Activated CD8-positive, alpha-beta T cell treated with anti-CD3 and anti-CD28 coated beads for 36 hours (primary cell): ENCODE measurements at regions of chr11 and their contacts with region 1.

Region 1: GRCh38 chr11:61792310-61793085 is at the starts of genes FEN1 and TMEM258:
- DNase-seq: peak; percentile 94
- ATAC-seq: peak; percentile 87
- H3K4me3 Mint-ChIP-seq: peak within 1 kb of the TSS; percentile 89
- H3K27ac Mint-ChIP-seq: peak within 1 kb of the TSS; percentile 100
- H3K4me1 Mint-ChIP-seq: peaks cover 57% of the 10 kb centered on the region
- H3K27me3 Mint-ChIP-seq: no peaks in the 10 kb centered on the region
- CTCF ChIP-seq: no peak
- total RNA-seq, gene FEN1: 109 to 114 TPM
- total RNA-seq, gene TMEM258: 162 to 170 TPM

Region 2: DNA sequence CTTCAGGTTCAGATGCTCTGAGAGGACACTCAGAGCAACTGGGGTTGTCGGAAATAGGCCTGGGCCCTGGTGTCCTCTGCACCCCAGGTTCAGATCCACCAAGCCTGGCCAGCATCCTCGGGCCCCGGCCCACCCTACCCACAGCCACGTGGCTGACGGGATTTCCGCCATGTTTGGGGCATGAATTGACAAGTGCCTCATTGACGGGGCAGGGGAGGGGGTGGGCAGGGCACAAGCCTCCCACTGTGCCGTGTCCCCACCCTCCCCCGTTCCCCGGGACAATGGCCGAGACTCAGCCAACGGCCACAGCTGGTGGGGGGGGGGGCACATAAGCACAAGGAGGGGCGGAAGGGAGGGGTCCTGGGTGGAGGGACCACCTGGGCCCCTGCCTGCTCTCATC is 31.6 kb before region 1 on chr11:
- CTCF ChIA-PET with region 1: no interaction called
- POLR2A ChIA-PET with region 1: no interaction called
- intact Hi-C with region 1: no loop called
- DNase-seq: no peak
- ATAC-seq: no peak
- H3K4me3 Mint-ChIP-seq: no peak overlapping the region
- H3K27ac Mint-ChIP-seq: no peak overlapping the region
- H3K4me1 Mint-ChIP-seq: peaks cover 11% of the 10 kb centered on the region
- H3K27me3 Mint-ChIP-seq: no peaks in the 10 kb centered on the region
- CTCF ChIP-seq: no peak

Region 3: DNA sequence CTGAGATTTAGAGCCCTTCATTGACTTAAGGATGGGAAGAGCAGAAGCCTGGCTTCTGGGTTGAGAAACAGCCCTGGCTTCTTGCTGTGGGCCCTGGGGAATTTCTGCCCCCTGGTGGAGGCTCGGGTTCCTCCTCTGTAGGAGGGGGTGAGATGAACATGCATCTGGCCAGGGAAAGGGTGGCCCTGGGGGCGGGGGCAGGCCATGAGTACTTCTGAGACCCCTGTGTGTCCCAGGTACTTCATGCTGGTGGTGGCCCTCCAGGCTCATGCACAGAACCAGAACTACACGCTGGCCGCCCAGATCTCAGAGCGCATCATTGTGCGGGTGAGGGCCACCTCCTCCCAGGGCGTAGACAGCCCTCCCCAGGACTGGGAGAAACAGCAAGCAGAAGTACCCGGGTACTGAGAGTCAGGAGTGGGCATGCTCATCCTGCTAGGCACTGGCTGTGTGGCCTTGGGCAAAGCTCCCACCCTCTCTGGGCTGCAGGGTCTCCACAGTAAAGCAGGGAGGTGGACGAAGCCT is 15.9 kb before region 1 on chr11:
- CTCF ChIA-PET with region 1: interaction called, 14 read pairs
- POLR2A ChIA-PET with region 1: interaction called, 32 read pairs
- intact Hi-C with region 1: no loop called
- DNase-seq: peak; percentile 86
- ATAC-seq: peak; percentile 78
- H3K4me3 Mint-ChIP-seq: no peak overlapping the region
- H3K27ac Mint-ChIP-seq: no peak overlapping the region
- H3K4me1 Mint-ChIP-seq: peaks cover 13% of the 10 kb centered on the region
- H3K27me3 Mint-ChIP-seq: peaks cover 2% of the 10 kb centered on the region
- CTCF ChIP-seq: peak; percentile 73

Region 4: DNA sequence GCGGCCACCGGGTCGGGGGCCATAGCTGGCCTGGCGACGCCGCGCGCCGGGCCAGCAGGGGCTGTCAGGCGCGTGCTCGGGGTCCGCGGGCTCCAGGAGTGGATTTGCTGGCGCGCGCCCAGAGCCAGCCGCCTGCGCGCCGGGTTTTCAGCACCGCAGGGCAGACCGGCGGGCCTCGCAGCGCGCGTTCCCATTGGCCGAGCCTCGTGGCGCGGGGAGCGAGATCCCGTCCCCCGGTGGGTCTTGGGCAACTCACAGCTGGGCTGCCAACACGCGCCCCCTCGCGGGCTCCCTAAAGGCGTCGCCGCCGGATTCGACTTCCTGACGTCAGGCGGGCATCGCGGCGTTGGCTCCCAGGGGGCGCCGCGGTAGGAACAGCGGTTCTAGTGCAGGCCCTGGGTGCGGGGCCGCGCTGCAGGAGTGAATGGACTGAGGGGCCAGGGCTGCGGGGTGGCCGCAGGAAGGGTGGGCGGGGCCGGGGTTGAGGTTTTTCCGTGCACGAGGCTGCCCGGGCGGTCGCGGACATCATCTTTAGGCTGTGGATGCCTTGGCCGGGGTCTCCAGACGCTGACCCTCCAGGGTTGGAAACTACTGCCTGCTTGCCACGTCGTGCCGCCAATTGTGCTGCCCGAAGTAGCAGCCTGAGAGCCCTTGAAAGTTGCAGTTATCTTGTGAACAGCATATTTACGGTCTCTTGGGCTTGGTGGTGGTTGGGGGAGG is 24.4 kb after region 1 on chr11 and contains the start of gene FADS1:
- CTCF ChIA-PET with region 1: interaction called, 49 read pairs
- POLR2A ChIA-PET with region 1: interaction called, 119 read pairs
- intact Hi-C with region 1: no loop called
- DNase-seq: peak; percentile 92
- ATAC-seq: peak; percentile 72
- H3K4me3 Mint-ChIP-seq: peak within 1 kb of the TSS; percentile 96
- H3K27ac Mint-ChIP-seq: peak within 1 kb of the TSS; percentile 83
- H3K4me1 Mint-ChIP-seq: peaks cover 5% of the 10 kb centered on the region
- H3K27me3 Mint-ChIP-seq: peaks cover 4% of the 10 kb centered on the region
- CTCF ChIP-seq: peak; percentile 59
- total RNA-seq, gene FADS1: 33.9 to 34.4 TPM

Region 5: DNA sequence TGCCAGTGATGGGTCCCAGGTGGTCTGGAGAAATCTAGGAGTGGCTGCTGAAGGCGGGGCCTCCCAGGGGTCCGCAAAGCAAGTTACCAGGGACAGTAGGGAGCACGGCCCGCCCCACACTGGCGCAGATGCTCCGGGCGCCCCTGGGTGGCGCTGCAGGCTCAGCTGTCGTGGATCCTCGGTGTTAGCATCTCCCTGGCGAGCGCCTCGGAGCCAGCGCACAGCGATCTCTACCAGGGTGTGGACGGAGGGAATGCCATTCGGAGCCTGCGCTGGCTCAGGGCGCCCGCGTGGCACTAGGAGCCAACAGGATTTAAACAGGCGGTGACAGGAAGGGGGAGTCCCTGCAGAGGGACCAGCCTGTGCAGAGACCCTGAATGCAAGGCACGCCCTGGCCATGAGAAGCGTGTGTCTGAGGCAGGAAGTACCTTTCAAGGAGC is 78.7 kb after region 1 on chr11:
- CTCF ChIA-PET with region 1: interaction called, 16 read pairs
- POLR2A ChIA-PET with region 1: no interaction called
- intact Hi-C with region 1: no loop called
- DNase-seq: peak; percentile 80
- ATAC-seq: peak; percentile 97
- H3K4me3 Mint-ChIP-seq: peak overlapping the region; percentile 48
- H3K27ac Mint-ChIP-seq: no peak overlapping the region
- H3K4me1 Mint-ChIP-seq: peaks cover 2% of the 10 kb centered on the region
- H3K27me3 Mint-ChIP-seq: no peaks in the 10 kb centered on the region
- CTCF ChIP-seq: peak; percentile 95